ENCODE measurements at regions of chr1 and their contacts with region 1.

Region 1: GRCh38 chr1:107056426-107057196 is at the start of gene PRMT6:
- DNase-seq: peak; percentile 87
- ATAC-seq: peak; percentile 95
- H3K4me3 Mint-ChIP-seq: peak within 1 kb of the TSS; percentile 95
- H3K27ac Mint-ChIP-seq: peak within 1 kb of the TSS; percentile 96
- H3K4me1 Mint-ChIP-seq: peaks cover 22% of the 10 kb centered on the region
- H3K27me3 Mint-ChIP-seq: no peaks in the 10 kb centered on the region
- CTCF ChIP-seq: no peak
- total RNA-seq, gene PRMT6: 19.4 to 20.7 TPM

Region 2: GRCh38 chr1:107142140-107142542 is 85.5 kb after region 1 on chr1:
- CTCF ChIA-PET with region 1: no interaction called
- POLR2A ChIA-PET with region 1: interaction called, 3 read pairs
- intact Hi-C with region 1: loop called (anchors 5 kb)
- DNase-seq: no peak
- ATAC-seq: no peak
- H3K4me3 Mint-ChIP-seq: peak overlapping the region; percentile 77
- H3K27ac Mint-ChIP-seq: no peak overlapping the region
- H3K4me1 Mint-ChIP-seq: peaks cover 23% of the 10 kb centered on the region
- H3K27me3 Mint-ChIP-seq: peaks cover 38% of the 10 kb centered on the region
- CTCF ChIP-seq: peak; percentile 91

Region 3: DNA sequence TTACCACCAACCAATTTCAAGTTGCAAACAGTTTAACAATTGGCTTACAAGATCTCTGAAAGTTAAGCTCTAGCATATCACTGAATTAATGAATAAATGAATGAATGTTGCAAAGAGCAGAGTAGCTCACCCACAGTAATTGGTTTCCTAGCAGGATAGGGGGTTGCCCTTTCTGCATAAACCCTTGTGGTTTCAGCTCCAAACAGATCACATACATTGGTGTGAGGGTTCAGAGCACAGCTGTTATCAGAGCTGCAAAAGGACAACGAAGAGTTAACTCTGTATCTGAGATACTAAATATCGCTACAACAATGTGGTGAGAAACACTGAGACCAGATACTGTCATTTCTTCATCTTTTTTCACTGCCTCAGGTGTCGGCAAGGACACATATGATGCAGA is 130.8 kb after region 1 on chr1:
- CTCF ChIA-PET with region 1: no interaction called
- POLR2A ChIA-PET with region 1: no interaction called
- intact Hi-C with region 1: no loop called
- DNase-seq: no peak
- ATAC-seq: no peak
- H3K4me3 Mint-ChIP-seq: no peak overlapping the region
- H3K27ac Mint-ChIP-seq: no peak overlapping the region
- H3K4me1 Mint-ChIP-seq: no peaks in the 10 kb centered on the region
- H3K27me3 Mint-ChIP-seq: no peaks in the 10 kb centered on the region
- CTCF ChIP-seq: no peak

Region 4: GRCh38 chr1:107273515-107273914 is 216.9 kb after region 1 on chr1:
- CTCF ChIA-PET with region 1: no interaction called
- POLR2A ChIA-PET with region 1: no interaction called
- intact Hi-C with region 1: no loop called
- DNase-seq: no peak
- ATAC-seq: no peak
- H3K4me3 Mint-ChIP-seq: no peak overlapping the region
- H3K27ac Mint-ChIP-seq: no peak overlapping the region
- H3K4me1 Mint-ChIP-seq: no peaks in the 10 kb centered on the region
- H3K27me3 Mint-ChIP-seq: no peaks in the 10 kb centered on the region
- CTCF ChIP-seq: no peak

Region 5: GRCh38 chr1:107326824-107327445 is 270.3 kb after region 1 on chr1:
- CTCF ChIA-PET with region 1: no interaction called
- POLR2A ChIA-PET with region 1: no interaction called
- intact Hi-C with region 1: no loop called
- DNase-seq: no peak
- ATAC-seq: no peak
- H3K4me3 Mint-ChIP-seq: no peak overlapping the region
- H3K27ac Mint-ChIP-seq: no peak overlapping the region
- H3K4me1 Mint-ChIP-seq: no peaks in the 10 kb centered on the region
- H3K27me3 Mint-ChIP-seq: peaks cover 5% of the 10 kb centered on the region
- CTCF ChIP-seq: no peak

Measured in activated CD8-positive, alpha-beta T cell treated with anti-CD3 and anti-CD28 coated beads for 36 hours (primary cell).